Mammary epithelial cell (primary cell): ENCODE measurements at regions of chr12 and their contacts with region 1.

Region 1: GRCh38 chr12:92912052-92912451 is 17.0 kb downstream of the EEA1 start:
- DNase-seq: peak; percentile 99
- H3K4me3 ChIP-seq: peak overlapping the region in 2 of 3 experiments; percentile 11 to 15
- H3K27ac ChIP-seq: peak overlapping the region; percentile 67
- H3K4me1 ChIP-seq: peaks cover 16% of the 10 kb centered on the region
- H3K27me3 ChIP-seq: no peaks in the 10 kb centered on the region
- CTCF ChIP-seq: no peak

Region 2: DNA sequence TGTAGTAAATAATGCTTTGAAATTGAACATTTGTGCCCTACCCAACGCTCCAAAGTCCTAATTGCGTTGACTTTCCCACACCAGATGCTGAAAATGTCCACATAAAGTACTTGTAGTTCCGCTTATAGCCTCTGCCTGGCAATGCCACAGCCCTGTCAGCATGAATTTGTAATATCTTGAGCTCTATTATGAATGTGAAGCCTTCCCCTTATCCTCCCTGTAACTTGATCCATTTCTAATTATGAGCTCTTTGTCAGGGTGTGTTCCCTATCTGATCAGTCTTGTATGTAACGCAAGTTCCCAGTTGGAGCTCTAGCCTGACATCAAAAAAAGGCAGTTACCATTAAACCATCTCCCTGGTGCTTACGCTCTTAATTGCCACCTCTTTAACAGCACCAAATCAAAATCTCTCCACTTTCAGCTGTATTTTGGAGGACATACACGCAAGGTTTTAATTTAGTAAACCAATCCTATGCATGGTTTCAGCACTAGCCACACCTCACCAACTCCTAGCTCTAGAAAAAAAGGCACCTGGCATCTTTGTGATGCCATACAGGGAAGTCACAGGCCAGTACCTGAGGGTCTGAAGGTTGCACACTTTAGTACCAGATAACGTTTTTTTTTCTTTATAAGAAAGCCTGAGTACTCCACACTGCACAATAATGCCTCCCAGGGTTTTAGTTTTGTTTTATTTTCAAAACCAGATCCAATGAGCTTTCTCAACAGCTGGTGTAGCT is 52.2 kb before region 1 on chr12:
- CTCF ChIA-PET with region 1: no interaction called
- dilution Hi-C with region 1: no loop called
- in situ Hi-C with region 1: no loop called
- intact Hi-C with region 1: no loop called
- DNase-seq: no peak
- H3K4me3 ChIP-seq: no peak overlapping the region
- H3K27ac ChIP-seq: no peak overlapping the region
- H3K4me1 ChIP-seq: no peaks in the 10 kb centered on the region
- H3K27me3 ChIP-seq: no peaks in the 10 kb centered on the region
- CTCF ChIP-seq: no peak

Region 3: DNA sequence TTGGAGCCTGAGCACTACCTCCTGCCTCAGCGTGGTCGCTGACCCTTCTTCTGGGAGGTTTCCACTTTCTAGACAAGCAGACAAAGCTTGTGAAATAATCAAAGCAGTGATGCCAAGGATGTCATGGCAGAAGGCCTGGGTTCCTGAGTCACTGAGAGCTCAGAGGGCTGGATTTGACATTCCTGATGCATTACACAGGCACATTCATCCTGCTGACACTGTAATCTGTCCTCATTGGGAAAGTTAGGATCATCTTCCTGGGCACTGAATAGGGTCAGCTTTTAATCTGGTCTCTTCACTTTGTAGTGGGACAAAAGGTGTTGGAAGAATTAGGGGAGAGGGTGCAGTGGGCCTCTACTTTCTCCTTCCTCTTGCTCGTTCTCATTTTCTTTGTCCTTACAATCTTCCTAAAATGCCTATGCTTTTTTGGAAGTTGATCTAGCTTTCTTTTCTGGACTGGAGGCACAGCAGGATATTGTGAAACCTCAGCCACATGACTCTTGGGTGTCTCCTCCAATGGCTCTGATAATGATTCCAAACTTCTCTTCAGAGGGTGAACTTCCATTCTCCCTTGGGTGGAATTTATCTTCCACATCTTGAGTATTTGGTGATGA is 12.6 kb before region 1 on chr12:
- CTCF ChIA-PET with region 1: no interaction called
- dilution Hi-C with region 1: no loop called
- in situ Hi-C with region 1: no loop called
- intact Hi-C with region 1: loop called (anchors 1 kb)
- DNase-seq: peak; percentile 95
- H3K4me3 ChIP-seq: peak overlapping the region in 2 of 3 experiments; percentile 12 to 23
- H3K27ac ChIP-seq: peak overlapping the region; percentile 85
- H3K4me1 ChIP-seq: peaks cover 19% of the 10 kb centered on the region
- H3K27me3 ChIP-seq: no peaks in the 10 kb centered on the region
- CTCF ChIP-seq: no peak